MCF 10A (cell line): ENCODE measurements at regions of chr14 and their contacts with region 1.

Region 1: DNA sequence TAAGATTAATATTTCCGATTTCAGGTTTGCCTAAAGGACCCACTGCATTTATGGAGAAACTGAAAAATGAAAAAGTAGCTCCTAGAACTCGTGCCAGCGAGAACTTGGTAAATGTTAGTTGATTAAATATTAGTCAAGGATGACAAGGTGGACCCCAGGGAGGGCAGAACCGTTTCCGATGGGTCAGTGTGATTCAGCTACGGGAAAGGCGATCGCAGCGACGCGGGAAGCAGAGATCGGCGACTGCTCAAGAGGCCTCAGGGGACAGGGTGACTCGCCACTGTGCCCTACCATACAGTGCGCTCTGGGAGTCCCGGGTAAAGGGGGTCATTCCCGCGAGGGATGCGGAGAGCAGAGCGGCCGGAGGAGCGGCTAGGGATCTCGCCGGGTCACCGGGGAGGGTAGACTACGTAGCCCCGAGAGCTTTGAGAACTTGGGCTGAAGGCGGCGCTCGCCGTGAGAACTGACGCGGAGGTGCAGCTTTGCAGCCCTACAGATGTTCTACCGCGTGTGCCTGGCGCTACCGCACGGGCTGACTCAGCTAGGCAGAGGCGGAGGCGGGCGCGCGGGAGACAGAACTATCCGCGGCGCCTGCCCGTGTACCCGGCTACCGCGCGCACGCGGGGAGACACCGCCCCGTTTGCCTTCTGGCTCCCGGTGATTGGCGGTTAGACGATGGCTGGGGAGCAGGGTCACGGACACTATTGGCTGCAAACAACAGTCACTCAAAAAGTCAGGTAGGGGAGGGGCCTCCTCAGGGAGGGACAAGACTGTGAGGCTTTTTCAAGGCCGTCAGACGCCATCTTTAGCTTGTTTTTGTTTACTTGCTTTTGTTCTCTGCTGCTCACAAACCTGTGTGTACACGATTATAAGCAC is 3.2 kb downstream of the C14orf93 start:
- DNase-seq: peak; percentile 98
- H3K4me3 Mint-ChIP-seq: peak overlapping the region; percentile 94
- H3K27ac Mint-ChIP-seq: peak overlapping the region; percentile 99
- H3K4me1 Mint-ChIP-seq: peaks cover 38% of the 10 kb centered on the region
- H3K27me3 Mint-ChIP-seq: no peaks in the 10 kb centered on the region
- CTCF ChIP-seq: peak; percentile 15

Region 2: GRCh38 chr14:22505697-22506377 is 500.9 kb before region 1 on chr14:
- CTCF ChIA-PET with region 1: no interaction called
- POLR2A ChIA-PET with region 1: no interaction called
- intact Hi-C with region 1: no loop called
- DNase-seq: no peak
- H3K4me3 Mint-ChIP-seq: no peak overlapping the region
- H3K27ac Mint-ChIP-seq: no peak overlapping the region
- H3K4me1 Mint-ChIP-seq: no peaks in the 10 kb centered on the region
- H3K27me3 Mint-ChIP-seq: no peaks in the 10 kb centered on the region
- CTCF ChIP-seq: no peak

Region 3: GRCh38 chr14:22567437-22567836 is 439.3 kb before region 1 on chr14:
- CTCF ChIA-PET with region 1: no interaction called
- POLR2A ChIA-PET with region 1: no interaction called
- intact Hi-C with region 1: no loop called
- DNase-seq: no peak
- H3K4me3 Mint-ChIP-seq: no peak overlapping the region
- H3K27ac Mint-ChIP-seq: no peak overlapping the region
- H3K4me1 Mint-ChIP-seq: peaks cover 8% of the 10 kb centered on the region
- H3K27me3 Mint-ChIP-seq: no peaks in the 10 kb centered on the region
- CTCF ChIP-seq: no peak

Region 4: DNA sequence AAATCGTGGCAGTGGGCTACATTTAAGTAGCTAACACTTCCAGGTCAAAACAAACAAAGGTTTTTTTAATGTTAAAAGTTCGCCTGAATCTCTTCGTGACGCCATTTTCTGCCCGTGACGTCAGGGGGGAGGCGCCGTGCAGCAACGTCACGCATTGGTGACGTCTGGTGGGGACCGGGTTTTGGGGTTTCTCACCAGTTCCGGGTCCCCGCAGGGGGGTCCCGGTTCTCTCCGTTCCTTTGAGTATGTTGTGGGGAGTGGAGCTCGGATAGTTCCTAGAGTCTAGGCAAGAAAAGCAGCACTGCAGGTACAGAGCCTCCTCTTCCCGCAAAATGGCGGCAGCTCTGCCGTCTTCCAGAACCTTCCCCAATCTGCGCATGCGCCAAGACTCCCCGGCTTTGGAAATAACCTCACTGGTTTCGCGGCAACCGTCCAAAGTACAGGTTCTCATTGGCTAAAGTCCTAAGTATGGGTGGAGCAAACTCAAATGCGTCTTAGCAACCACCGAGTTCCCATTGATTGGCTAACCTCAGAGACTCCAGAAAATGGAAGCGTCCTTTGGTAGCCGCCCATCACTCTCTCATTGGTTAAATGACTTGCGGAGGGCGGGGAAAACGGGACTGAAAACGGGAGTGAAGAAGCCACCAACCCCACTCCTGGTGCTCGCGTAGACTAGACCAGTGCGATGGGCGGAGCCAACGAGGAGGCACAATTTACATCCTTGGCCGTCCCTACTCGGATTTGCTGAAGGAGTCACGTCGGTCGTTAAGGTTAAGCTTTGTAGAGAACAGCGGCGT is 87.8 kb before region 1 on chr14 and contains the start of gene RBM23:
- CTCF ChIA-PET with region 1: no interaction called
- POLR2A ChIA-PET with region 1: interaction called, 11 read pairs
- intact Hi-C with region 1: no loop called
- DNase-seq: peak; percentile 100
- H3K4me3 Mint-ChIP-seq: peak within 1 kb of the TSS; percentile 87
- H3K27ac Mint-ChIP-seq: peak within 1 kb of the TSS; percentile 100
- H3K4me1 Mint-ChIP-seq: peaks cover 31% of the 10 kb centered on the region
- H3K27me3 Mint-ChIP-seq: no peaks in the 10 kb centered on the region
- CTCF ChIP-seq: no peak
- total RNA-seq, gene RBM23: 57.6 and 60.6 TPM in 2 replicates

Region 5: GRCh38 chr14:22973217-22974032 is 33.4 kb before region 1 on chr14:
- CTCF ChIA-PET with region 1: interaction called, 11 read pairs
- POLR2A ChIA-PET with region 1: interaction called, 91 read pairs
- intact Hi-C with region 1: no loop called
- DNase-seq: peak; percentile 78
- H3K4me3 Mint-ChIP-seq: peak overlapping the region; percentile 50
- H3K27ac Mint-ChIP-seq: peak overlapping the region; percentile 51
- H3K4me1 Mint-ChIP-seq: peaks cover 51% of the 10 kb centered on the region
- H3K27me3 Mint-ChIP-seq: no peaks in the 10 kb centered on the region
- CTCF ChIP-seq: peak; percentile 65

Region 6: DNA sequence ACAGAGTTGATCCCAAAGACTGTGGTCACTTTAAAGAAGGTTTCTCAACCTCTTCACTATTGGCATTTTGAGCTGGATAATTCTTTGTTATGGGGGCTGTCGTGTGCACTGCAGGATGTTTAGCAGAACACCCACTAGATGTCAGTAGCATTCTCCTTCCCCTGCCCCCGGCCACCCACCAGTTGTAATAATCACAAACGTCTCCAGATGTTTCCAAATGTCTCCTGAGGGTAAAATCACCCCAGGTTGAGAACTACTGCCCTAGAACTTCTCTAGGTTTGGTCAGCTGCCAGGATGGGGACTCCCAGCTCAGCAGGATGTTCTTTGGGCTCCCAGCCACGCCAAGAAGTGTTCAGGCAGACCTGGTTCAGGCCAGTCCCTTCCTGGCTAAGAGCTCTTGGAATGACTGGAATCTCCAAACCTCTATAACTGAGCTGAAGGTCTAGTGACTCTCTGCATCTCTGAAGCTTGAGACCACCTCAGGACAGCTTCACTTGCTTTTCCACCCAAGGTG is 12.0 kb before region 1 on chr14:
- CTCF ChIA-PET with region 1: interaction called, 65 read pairs
- POLR2A ChIA-PET with region 1: interaction called, 43 read pairs
- intact Hi-C with region 1: no loop called
- DNase-seq: peak; percentile 84
- H3K4me3 Mint-ChIP-seq: no peak overlapping the region
- H3K27ac Mint-ChIP-seq: no peak overlapping the region
- H3K4me1 Mint-ChIP-seq: peaks cover 16% of the 10 kb centered on the region
- H3K27me3 Mint-ChIP-seq: no peaks in the 10 kb centered on the region
- CTCF ChIP-seq: peak; percentile 44

Region 7: GRCh38 chr14:23034483-23035302 is 27.9 kb after region 1 on chr14 and contains the start of gene PSMB5:
- CTCF ChIA-PET with region 1: interaction called, 5 read pairs
- POLR2A ChIA-PET with region 1: interaction called, 26 read pairs
- intact Hi-C with region 1: no loop called
- DNase-seq: peak; percentile 96
- H3K4me3 Mint-ChIP-seq: peak within 1 kb of the TSS; percentile 92
- H3K27ac Mint-ChIP-seq: peak within 1 kb of the TSS; percentile 99
- H3K4me1 Mint-ChIP-seq: peaks cover 8% of the 10 kb centered on the region
- H3K27me3 Mint-ChIP-seq: no peaks in the 10 kb centered on the region
- CTCF ChIP-seq: no peak
- total RNA-seq, gene PSMB5: 162 and 173 TPM in 2 replicates

Region 8: DNA sequence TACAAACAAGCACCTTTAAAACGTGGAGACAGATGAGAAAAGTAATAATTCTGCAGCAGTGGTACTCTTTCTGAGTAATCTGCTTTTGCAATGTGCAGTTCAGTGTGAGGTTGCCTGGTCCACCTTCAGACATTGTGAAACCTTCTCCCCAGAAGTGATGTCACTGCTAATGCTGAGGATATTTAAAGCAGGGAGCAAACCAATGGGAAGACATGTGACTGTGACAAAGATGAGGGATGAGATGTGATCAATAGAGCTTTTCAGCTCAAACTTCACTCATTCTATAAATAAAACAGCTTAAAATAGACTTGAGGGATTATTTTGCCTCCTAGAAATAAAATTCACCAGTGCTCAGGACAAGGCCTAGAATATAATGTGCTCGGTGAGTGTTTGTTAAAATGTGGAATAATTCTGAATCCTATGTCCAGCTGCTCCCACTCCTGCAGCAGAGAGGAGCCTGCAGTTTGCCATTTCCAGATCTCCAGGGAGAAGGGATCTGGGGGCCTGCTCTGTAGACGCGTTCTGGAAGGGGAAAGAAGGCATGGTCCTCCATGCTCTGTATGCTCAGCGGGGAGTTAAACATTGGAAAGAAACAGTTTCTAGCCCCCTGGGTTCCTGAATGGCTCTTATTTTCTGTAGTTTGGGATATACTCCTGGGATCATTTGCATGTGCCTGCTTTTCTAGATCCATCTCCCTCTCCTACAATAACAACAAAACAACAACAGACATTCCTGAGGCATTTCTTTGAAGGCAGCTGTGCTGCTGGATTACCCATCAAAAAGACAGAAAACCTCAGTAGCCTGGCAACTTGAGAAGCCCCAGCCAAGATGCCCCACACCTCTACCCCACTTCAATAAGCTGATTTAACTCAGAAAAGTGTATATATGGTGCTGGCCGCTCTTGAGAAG is 167.7 kb after region 1 on chr14:
- CTCF ChIA-PET with region 1: no interaction called
- POLR2A ChIA-PET with region 1: no interaction called
- intact Hi-C with region 1: no loop called
- DNase-seq: peak; percentile 65
- H3K4me3 Mint-ChIP-seq: no peak overlapping the region
- H3K27ac Mint-ChIP-seq: no peak overlapping the region
- H3K4me1 Mint-ChIP-seq: peaks cover 39% of the 10 kb centered on the region
- H3K27me3 Mint-ChIP-seq: no peaks in the 10 kb centered on the region
- CTCF ChIP-seq: no peak